Activated CD4-positive, alpha-beta T cell treated with anti-CD3 and anti-CD28 coated beads, Interleukin-2, amount 10 ng/mL, durations not matched to agents 7 days and 5 days (primary cell): ENCODE measurements at regions of chr3 and their contacts with region 1.

Region 1: GRCh38 chr3:105369500-105370371 is 3.0 kb downstream of the ALCAM start:
- DNase-seq: peak; percentile 40
- H3K4me3 Mint-ChIP-seq: peak overlapping the region; percentile 91
- H3K27ac Mint-ChIP-seq: peak overlapping the region; percentile 95
- H3K4me1 Mint-ChIP-seq: peaks cover 40% of the 10 kb centered on the region
- H3K27me3 Mint-ChIP-seq: peaks cover 17% of the 10 kb centered on the region

Region 2: GRCh38 chr3:105398437-105398836 is 28.7 kb after region 1 on chr3:
- CTCF ChIA-PET with region 1: interaction called, 3 read pairs
- POLR2A ChIA-PET with region 1: interaction called, 12 read pairs
- DNase-seq: no peak
- H3K4me3 Mint-ChIP-seq: no peak overlapping the region
- H3K27ac Mint-ChIP-seq: no peak overlapping the region
- H3K4me1 Mint-ChIP-seq: no peaks in the 10 kb centered on the region
- H3K27me3 Mint-ChIP-seq: peaks cover 4% of the 10 kb centered on the region